Activated CD8-positive, alpha-beta memory T cell treated with anti-CD3 and anti-CD28 coated beads, Interleukin-2, amount 10 ng/mL, durations not matched to agents 7 days and 5 days (primary cell): ENCODE measurements at regions of chr3 and their contacts with region 1.

Region 1: GRCh38 chr3:136752422-136753325 is 496 bp upstream of the STAG1 start:
- DNase-seq: peak; percentile 99
- ATAC-seq: peak; percentile 88
- H3K4me3 Mint-ChIP-seq: peak overlapping the region; percentile 80
- H3K27ac Mint-ChIP-seq: peak overlapping the region; percentile 95
- H3K4me1 Mint-ChIP-seq: peaks cover 35% of the 10 kb centered on the region
- H3K27me3 Mint-ChIP-seq: no peaks in the 10 kb centered on the region

Region 2: DNA sequence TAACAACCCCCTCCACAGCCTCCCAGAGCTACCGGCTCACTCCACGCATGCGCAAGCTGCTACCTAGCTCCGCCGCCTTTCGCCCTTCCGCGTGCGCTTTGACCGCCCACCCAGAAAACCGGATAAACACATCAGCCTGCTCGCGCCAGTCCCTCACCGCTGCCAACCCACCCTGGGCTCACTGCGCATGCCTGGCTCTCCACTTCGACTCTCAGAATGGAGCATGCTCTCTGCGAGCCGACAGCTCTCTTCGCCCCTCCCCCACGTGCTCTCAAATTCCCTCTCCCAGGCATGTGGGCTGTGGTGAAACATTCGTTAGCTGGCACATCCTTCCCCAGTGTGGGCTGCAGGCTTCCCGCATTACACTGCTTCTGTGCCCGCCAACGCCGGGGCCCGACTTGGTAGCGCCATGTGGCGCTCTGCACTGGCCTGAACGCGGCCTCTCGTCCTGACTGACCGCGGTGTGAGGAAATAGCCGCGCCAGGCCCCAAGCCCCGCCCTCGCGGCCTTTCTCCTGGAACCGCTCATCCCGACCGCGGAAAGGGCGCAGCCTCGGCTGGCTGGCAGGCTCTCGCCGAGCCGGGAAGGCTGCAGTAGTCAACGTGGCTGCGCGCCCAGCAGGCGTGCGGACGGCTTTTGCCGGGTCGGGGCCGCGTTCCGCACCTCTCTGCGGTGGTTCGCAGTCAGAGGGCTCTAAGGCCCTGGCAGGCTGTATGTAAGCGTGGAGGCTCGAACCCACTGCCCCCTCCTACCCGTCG is 556.1 kb before region 1 on chr3:
- CTCF ChIA-PET with region 1: interaction called, 23 read pairs
- DNase-seq: peak; percentile 100
- ATAC-seq: peak; percentile 79
- H3K4me3 Mint-ChIP-seq: peak overlapping the region; percentile 98
- H3K27ac Mint-ChIP-seq: peak overlapping the region; percentile 98
- H3K4me1 Mint-ChIP-seq: peaks cover 20% of the 10 kb centered on the region
- H3K27me3 Mint-ChIP-seq: peaks cover 3% of the 10 kb centered on the region

Region 3: DNA sequence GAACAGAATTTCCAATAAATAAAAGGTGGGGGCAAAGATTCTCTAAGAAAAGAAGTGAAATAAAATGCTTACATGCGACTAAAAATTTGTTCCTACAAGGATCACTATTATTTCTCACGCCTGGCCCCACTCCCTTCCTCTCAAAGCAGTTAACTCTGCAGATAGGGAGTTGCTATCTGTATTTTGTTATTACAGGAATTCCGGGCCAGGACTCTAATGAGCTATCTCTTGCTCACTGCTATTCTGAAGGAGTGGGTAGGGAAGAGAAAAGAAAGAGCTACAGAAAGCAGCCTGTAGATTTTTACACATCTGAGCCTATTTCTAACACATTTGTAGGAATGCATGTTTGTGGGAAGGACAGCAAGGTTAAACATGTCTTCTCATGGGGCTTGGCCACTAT is 362.1 kb before region 1 on chr3:
- CTCF ChIA-PET with region 1: interaction called, 55 read pairs
- DNase-seq: no peak
- ATAC-seq: no peak
- H3K4me3 Mint-ChIP-seq: no peak overlapping the region
- H3K27ac Mint-ChIP-seq: no peak overlapping the region
- H3K4me1 Mint-ChIP-seq: no peaks in the 10 kb centered on the region
- H3K27me3 Mint-ChIP-seq: no peaks in the 10 kb centered on the region

Region 4: DNA sequence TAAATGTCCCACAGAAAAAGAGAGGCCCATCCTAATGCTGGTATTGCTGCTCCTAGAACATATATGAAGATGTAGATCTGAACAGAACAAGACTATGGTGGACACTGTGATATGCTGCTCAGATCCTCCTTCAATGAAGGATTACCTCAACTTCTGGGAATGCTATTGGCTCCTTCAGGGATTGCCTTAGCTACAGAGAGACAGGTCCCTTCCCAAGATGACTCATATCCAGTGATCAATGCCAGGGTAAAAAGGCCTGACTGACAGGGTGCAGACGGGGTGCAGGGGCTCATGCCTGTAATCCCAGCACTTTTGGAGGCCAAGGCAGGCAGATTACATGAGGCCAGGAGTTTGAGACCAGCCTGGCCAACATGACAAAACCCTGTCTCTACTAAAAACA is 20.0 kb after region 1 on chr3:
- CTCF ChIA-PET with region 1: interaction called, 12 read pairs
- DNase-seq: no peak
- ATAC-seq: no peak
- H3K4me3 Mint-ChIP-seq: no peak overlapping the region
- H3K27ac Mint-ChIP-seq: no peak overlapping the region
- H3K4me1 Mint-ChIP-seq: no peaks in the 10 kb centered on the region
- H3K27me3 Mint-ChIP-seq: no peaks in the 10 kb centered on the region

Region 5: GRCh38 chr3:136818769-136819391 is 66.2 kb after region 1 on chr3 and contains the start of gene SLC35G2:
- CTCF ChIA-PET with region 1: no interaction called
- DNase-seq: peak; percentile 60
- ATAC-seq: peak; percentile 70
- H3K4me3 Mint-ChIP-seq: peak within 1 kb of the TSS; percentile 81
- H3K27ac Mint-ChIP-seq: peak within 1 kb of the TSS; percentile 75
- H3K4me1 Mint-ChIP-seq: peaks cover 19% of the 10 kb centered on the region
- H3K27me3 Mint-ChIP-seq: peaks cover 47% of the 10 kb centered on the region
- total RNA-seq, gene SLC35G2: 1.1 to 1.6 TPM

Region 6: DNA sequence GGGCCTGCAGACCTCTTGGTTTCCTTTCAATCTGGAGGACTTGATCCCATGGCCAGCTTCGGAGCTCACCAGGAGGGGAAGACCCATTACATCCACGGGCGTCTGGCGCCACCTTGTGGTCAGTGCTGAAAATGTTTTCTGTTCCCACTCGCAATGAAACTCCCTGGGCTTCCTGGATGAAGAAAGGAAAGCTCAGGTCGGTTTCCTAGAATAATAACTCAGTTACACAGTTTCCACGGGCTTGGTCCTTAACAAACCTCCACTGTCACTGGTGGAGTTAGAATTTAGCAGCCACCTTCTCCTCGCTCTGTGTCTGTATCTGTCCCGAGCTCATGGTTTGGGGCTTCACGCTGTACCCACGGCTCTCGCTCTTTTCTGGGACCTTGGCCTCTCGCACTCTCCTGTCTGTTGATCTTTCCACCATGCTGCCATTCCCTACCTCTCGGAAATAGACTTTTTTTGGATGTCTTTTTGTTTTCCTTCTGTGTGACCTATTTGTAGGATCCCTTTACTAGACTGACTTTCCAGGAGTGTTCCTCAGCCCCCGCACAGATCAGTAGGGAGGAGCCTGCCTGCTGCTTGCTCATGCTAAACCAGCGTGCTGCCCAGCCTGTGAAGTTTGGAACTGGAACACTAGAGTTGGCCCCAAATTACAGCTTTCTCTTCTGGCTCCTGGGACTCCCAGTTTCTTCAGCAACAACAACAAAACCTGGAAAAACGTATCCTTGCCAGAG is 261.4 kb after region 1 on chr3:
- CTCF ChIA-PET with region 1: interaction called, 171 read pairs
- DNase-seq: peak; percentile 86
- ATAC-seq: peak; percentile 94
- H3K4me3 Mint-ChIP-seq: peak overlapping the region; percentile 67
- H3K27ac Mint-ChIP-seq: no peak overlapping the region
- H3K4me1 Mint-ChIP-seq: peaks cover 11% of the 10 kb centered on the region
- H3K27me3 Mint-ChIP-seq: no peaks in the 10 kb centered on the region